ENCODE measurements at regions of chr6 and their contacts with region 1.

Region 1: GRCh38 chr6:32558426-32559057 is 28.5 kb upstream of the HLA-DRB5 start:
- DNase-seq: no peak
- ATAC-seq: no peak
- H3K4me3 ChIP-seq: no peak overlapping the region
- H3K27ac ChIP-seq: no peak overlapping the region
- H3K4me1 ChIP-seq: no peaks in the 10 kb centered on the region
- H3K27me3 ChIP-seq: no peaks in the 10 kb centered on the region
- CTCF ChIP-seq: no peak
- EP300 ChIP-seq: no peak
- POLR2A ChIP-seq: no peak
- RAD21 ChIP-seq: no peak

Region 2: GRCh38 chr6:32501016-32501415 is 57.5 kb before region 1 on chr6:
- CTCF ChIA-PET with region 1: no interaction called
- POLR2A ChIA-PET with region 1: no interaction called
- in situ Hi-C with region 1: no loop called
- intact Hi-C with region 1: no loop called
- DNase-seq: no peak
- ATAC-seq: no peak
- H3K4me3 ChIP-seq: no peak overlapping the region
- H3K27ac ChIP-seq: no peak overlapping the region
- H3K4me1 ChIP-seq: no peaks in the 10 kb centered on the region
- H3K27me3 ChIP-seq: no peaks in the 10 kb centered on the region
- CTCF ChIP-seq: no peak
- EP300 ChIP-seq: no peak
- POLR2A ChIP-seq: no peak
- RAD21 ChIP-seq: no peak

Region 3: DNA sequence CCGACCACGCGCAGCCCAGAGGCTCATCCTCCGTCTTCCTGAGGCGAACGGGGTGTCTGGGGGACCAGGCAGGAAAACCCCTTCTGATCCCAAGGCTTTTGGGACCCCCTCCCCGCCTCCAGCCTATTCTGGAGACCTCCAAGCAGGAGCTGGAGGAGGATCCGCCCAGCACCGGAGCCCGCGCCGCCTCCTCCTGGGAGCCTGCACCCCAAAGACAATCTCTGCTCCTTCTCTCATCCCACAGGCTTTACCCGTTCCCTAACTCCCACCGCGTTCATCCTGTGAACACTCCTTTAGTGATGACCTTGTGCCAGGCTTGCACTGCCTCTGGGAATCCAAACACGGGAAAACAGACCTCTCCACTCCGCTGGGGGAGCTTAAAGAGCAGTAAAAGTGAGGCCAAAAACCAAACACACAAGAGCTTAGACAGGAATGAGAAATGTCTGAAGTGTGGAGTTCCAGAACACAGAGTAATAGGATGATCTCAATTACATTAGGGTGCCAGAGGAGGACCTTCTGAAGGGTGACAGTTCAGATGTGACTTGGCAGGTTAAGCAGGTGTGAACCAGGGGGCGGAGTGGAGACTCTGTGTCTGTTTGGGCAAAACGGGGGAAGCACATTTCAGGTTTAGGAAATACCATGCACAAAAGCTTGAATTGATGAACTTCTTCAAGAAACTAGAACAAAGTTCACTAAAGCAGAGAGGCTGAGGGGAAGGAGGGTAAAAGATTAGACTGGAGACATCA is 36.1 kb before region 1 on chr6:
- CTCF ChIA-PET with region 1: no interaction called
- POLR2A ChIA-PET with region 1: no interaction called
- in situ Hi-C with region 1: loop called (anchors 5 kb)
- intact Hi-C with region 1: no loop called
- DNase-seq: no peak
- ATAC-seq: no peak
- H3K4me3 ChIP-seq: no peak overlapping the region
- H3K27ac ChIP-seq: no peak overlapping the region
- H3K4me1 ChIP-seq: no peaks in the 10 kb centered on the region
- H3K27me3 ChIP-seq: no peaks in the 10 kb centered on the region
- CTCF ChIP-seq: no peak
- EP300 ChIP-seq: no peak
- POLR2A ChIP-seq: no peak
- RAD21 ChIP-seq: no peak

Measured in K562 (cell line).